HEK293 (cell line): ENCODE measurements at regions of chr6 and their contacts with region 1.

Region 1: GRCh38 chr6:44475779-44476434 is 88.4 kb downstream of the CDC5L start:
- H3K4me3 ChIP-seq: no peak overlapping the region
- H3K27ac ChIP-seq: peak overlapping the region; percentile 0; the same call in 1 of the 2 replicates
- H3K4me1 ChIP-seq: no peaks in the 10 kb centered on the region
- CTCF ChIP-seq: peak; percentile 97

Region 2: DNA sequence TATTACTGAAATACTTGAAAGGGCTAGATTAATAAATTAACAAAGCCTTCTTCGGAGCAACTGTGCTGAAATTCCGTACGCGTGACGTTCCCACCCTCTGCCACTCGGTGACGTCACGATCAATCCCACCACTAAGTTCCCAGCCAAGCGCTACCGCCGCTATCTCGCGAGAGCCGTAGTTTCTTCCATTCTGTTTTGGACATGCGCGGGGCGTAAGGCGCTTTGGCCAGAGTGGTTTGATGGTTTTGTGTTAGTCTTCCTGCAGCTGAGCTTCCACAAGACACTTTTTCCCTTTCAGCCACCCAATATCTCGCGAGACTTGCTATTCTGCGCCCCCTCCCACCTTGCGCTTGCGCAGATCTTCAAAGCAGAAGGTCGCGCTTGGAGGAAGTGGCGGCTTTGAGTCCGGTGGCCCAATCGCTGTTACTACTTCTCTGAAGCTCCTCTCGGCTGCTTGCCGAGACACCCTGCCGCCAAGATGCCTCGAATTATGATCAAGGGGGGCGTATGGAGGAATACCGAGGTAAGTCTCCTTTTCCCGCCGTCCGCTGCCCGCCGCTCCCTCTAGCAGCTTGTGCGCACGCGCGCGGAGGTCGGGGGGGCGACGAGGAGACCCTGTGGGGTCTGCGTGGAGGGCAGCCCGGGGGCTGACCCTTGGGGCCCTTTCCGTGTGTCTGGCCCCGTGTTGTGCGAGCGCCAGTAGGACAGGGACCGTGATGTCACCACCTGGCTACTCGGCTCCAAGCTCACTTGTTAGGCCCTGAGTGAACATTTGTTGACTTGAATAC is 88.4 kb before region 1 on chr6 and contains the start of gene CDC5L:
- CTCF ChIA-PET with region 1: no interaction called
- POLR2A ChIA-PET with region 1: no interaction called
- H3K4me3 ChIP-seq: peak within 1 kb of the TSS; percentile 76
- H3K27ac ChIP-seq: peak within 1 kb of the TSS; percentile 96
- H3K4me1 ChIP-seq: peaks cover 8% of the 10 kb centered on the region
- CTCF ChIP-seq: 0 out of 2 replicates have a peak, but pooled peaks have one; percentile 22

Region 3: GRCh38 chr6:44446628-44447306 is 29.1 kb before region 1 on chr6:
- CTCF ChIA-PET with region 1: interaction called, 14 read pairs
- POLR2A ChIA-PET with region 1: no interaction called
- H3K4me3 ChIP-seq: no peak overlapping the region
- H3K27ac ChIP-seq: no peak overlapping the region
- H3K4me1 ChIP-seq: peaks cover 31% of the 10 kb centered on the region
- CTCF ChIP-seq: no peak

Region 4: GRCh38 chr6:44489910-44490604 is 14.2 kb after region 1 on chr6:
- CTCF ChIA-PET with region 1: interaction called, 28 read pairs
- POLR2A ChIA-PET with region 1: no interaction called
- H3K4me3 ChIP-seq: no peak overlapping the region
- H3K27ac ChIP-seq: no peak overlapping the region
- H3K4me1 ChIP-seq: no peaks in the 10 kb centered on the region
- CTCF ChIP-seq: no peak

Region 5: DNA sequence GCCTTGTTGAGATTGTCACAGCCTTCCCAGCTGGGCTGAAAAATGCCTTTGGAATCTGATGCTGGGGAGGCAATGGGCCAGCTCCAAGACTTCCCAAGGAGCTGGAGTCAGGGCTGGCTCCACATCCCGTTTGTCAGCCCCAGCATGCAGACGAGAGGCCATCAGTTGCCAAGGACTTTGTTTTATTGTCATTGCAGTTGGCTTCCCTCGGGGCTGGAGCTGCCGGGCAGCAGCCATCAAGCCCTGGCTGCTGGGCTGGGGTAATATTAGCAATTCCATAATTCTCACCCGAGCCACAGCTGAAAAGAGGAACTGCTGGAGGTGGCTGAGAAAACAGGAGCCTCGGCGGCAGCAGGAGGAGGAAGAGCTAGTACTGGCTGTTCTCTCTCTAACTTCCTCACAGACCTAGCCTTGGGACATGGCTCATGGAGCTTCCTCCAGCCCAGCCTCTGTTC is 94.1 kb after region 1 on chr6:
- CTCF ChIA-PET with region 1: interaction called, 14 read pairs
- POLR2A ChIA-PET with region 1: no interaction called
- H3K4me3 ChIP-seq: no peak overlapping the region
- H3K27ac ChIP-seq: no peak overlapping the region
- H3K4me1 ChIP-seq: no peaks in the 10 kb centered on the region
- CTCF ChIP-seq: no peak

Region 6: DNA sequence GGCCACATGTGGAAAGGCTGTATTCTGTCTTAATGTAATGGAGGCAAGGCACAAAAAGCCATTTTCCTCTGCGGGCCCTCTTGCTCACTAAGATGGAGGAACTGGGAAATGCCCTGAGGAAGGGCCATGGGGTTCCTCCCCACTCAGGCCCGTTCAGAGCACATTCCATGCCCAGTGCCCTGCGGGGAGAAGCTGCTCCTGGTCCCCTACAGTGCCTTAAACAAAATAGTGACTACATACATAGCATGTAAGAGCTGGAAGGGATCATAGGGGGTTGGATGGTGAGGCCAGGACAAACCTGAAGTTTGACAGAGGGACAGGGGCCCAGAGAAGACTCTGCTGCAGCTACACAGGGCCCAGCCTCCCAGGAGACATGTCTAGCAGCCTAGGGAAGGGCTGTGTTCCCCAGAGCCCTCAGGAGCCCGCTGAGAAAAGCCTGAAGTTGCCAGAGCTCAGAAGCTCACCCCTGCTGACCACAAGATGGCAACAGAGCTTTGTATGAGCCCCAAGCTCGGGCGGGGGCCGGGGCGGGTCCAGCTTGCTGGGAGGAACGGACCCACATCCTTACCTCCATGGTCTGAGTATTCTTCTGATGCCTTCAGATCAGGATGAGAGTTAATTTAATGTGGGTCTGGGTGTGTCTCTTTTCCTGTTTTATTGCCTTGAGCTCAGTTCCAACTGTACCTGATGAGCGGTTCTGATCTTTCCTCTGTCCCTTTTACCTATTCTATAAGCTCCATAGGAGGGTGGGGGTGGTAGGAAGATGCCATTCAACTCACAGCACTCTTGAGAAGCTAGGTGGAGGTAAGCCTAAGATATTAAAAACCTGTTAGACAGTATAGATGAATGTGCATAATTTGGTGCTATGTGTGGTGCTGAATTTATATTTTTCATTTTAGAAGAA is 154.5 kb after region 1 on chr6:
- CTCF ChIA-PET with region 1: interaction called, 71 read pairs
- POLR2A ChIA-PET with region 1: interaction called, 4 read pairs
- H3K4me3 ChIP-seq: no peak overlapping the region
- H3K27ac ChIP-seq: no peak overlapping the region
- H3K4me1 ChIP-seq: no peaks in the 10 kb centered on the region
- CTCF ChIP-seq: peak; percentile 54; the same call in 1 of the 2 replicates

Region 7: GRCh38 chr6:45714741-45715507 is 1239.0 kb after region 1 on chr6:
- CTCF ChIA-PET with region 1: interaction called, 20 read pairs
- POLR2A ChIA-PET with region 1: no interaction called
- H3K4me3 ChIP-seq: no peak overlapping the region
- H3K27ac ChIP-seq: no peak overlapping the region
- H3K4me1 ChIP-seq: peaks cover 9% of the 10 kb centered on the region
- CTCF ChIP-seq: peak; percentile 62